Left cardiac atrium (tissue), 4 donors: ENCODE measurements at regions of chr5 and their contacts with region 1.

Region 1: GRCh38 chr5:112892776-112893175 is 29.3 kb downstream of the REEP5 start:
- DNase-seq: no peak
- ATAC-seq: no peak

Region 2: GRCh38 chr5:112822456-112822855 is 70.3 kb before region 1 on chr5:
- intact Hi-C with region 1: loop called in 1 of 2 experiments (anchors 2 kb)
- DNase-seq: no peak
- ATAC-seq: no peak